Esophagus muscularis mucosa (tissue), 4 donors: ENCODE measurements at regions of chr5 and their contacts with region 1.

Region 1: DNA sequence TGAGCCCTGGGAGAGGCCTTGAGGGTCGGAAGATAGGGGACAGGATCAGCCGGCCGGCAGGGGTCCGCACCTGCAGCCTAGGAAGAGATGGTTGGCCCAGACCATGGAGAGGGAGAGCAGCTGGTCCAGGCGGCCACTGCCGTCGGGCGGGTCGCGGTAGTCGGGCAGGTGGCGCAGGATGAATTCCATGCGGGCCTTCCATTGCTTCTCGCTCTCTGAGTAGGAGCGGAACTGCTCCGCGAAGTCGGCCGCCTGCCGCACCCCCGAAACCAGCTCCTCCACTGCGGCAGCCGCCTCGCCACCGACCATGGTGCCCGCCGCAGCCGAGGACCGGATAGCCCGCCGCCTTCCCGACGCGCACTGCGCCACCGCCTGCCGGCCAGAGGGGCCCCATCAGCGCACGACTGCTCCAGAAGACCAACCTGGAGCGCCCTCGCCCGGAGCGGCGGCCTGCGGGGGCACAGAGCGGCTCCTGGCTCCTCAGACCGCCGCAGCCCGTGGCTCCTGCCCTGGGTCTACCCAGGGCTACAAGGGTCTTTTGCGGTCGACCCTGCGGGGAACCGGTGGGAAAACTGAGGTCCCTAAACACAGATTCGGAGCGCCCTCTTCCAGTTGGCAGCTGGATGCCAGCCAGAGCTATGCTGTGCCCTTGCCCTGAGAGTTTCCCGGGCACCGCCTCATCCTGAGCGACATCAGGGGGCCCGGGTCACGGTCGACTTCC is at the start of gene CDKN2AIPNL:
- DNase-seq: peak; percentile 96
- H3K4me3 ChIP-seq: peak within 1 kb of the TSS; percentile 71 to 84 (median 82)
- H3K27ac ChIP-seq: peak within 1 kb of the TSS; percentile 82 to 87 (median 85)
- H3K4me1 ChIP-seq: peaks cover 22 to 43% (median 38%) of the 10 kb centered on the region in 4 donors
- H3K27me3 ChIP-seq: no peaks in the 10 kb centered on the region
- CTCF ChIP-seq: peak; percentile 85 to 87 (median 87)
- EP300 ChIP-seq: no peak
- POLR2A ChIP-seq: peak; percentile 40
- total RNA-seq, gene CDKN2AIPNL: 17.9 to 19.9 (median 18.8) TPM

Region 2: DNA sequence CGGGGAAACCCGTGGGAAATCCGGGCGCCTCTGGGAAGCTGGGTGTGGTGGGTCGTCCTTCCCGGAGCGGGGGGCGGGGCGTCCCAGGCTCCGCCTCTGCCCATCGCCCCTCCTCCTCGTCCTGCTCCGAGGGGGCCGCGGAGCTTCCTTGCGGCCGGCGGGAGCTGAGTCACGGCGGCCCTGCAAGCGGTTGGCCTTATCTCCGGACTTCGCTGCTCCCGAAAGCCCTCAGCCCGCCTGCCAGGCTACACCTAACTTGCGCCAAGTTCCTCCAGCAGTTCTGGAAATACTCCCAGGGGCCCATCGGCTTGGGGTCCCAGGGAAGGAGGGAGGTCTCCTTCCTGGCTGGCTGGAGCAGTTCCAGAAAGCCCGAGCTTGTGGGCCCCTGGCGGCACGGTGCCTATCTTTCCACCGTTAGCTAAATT is 54.1 kb after region 1 on chr5:
- intact Hi-C with region 1: loop called (anchors 2 kb)
- DNase-seq: peak; percentile 95
- H3K4me3 ChIP-seq: peak overlapping the region; percentile 56 to 62 (median 60)
- H3K27ac ChIP-seq: peak overlapping the region; percentile 94 to 96 (median 95)
- H3K4me1 ChIP-seq: peaks cover 31 to 44% (median 42%) of the 10 kb centered on the region in 4 donors
- H3K27me3 ChIP-seq: no peaks in the 10 kb centered on the region
- CTCF ChIP-seq: no peak
- EP300 ChIP-seq: no peak
- POLR2A ChIP-seq: peak; percentile 50

Region 3: DNA sequence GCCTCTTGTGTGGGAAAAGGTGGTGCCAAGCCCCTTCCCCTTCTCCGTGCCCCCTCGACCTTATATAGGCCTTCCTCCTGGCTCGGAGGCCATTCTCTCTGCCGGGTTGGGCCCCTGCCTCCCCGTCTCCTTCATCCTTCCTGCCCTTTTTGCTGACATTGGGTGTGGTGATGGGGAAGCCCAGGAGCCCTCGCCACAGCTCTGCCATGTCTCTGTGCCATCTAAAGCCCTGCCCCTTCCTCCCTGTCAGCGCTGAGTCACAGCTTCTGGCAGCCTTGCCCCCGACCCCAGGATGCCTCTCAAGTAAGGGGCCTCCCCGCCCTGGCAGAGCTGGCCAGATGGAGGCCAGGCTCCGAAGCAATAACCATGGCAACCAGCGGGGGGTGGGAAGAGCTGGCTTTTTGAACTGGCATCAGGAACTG is 144.2 kb after region 1 on chr5:
- intact Hi-C with region 1: no loop called
- DNase-seq: no peak
- H3K4me3 ChIP-seq: no peak overlapping the region
- H3K27ac ChIP-seq: peak overlapping the region; percentile 75 to 84 (median 78)
- H3K4me1 ChIP-seq: peaks cover 58 to 70% (median 61%) of the 10 kb centered on the region in 4 donors
- H3K27me3 ChIP-seq: no peaks in the 10 kb centered on the region
- CTCF ChIP-seq: no peak
- EP300 ChIP-seq: no peak
- POLR2A ChIP-seq: no peak

Region 4: GRCh38 chr5:134577796-134578363 is 166.2 kb after region 1 on chr5:
- intact Hi-C with region 1: loop called (anchors 2 kb)
- DNase-seq: peak; percentile 95
- H3K4me3 ChIP-seq: no peak overlapping the region
- H3K27ac ChIP-seq: peak overlapping the region in 1 of 4 donors; percentile 32
- H3K4me1 ChIP-seq: peaks cover 48 to 83% (median 69%) of the 10 kb centered on the region in 4 donors
- H3K27me3 ChIP-seq: no peaks in the 10 kb centered on the region
- CTCF ChIP-seq: peak; percentile 77 to 86 (median 79)
- EP300 ChIP-seq: no peak
- POLR2A ChIP-seq: no peak